GM10248 (cell line): ENCODE measurements at regions of chr16 and their contacts with region 1.

Region 1: DNA sequence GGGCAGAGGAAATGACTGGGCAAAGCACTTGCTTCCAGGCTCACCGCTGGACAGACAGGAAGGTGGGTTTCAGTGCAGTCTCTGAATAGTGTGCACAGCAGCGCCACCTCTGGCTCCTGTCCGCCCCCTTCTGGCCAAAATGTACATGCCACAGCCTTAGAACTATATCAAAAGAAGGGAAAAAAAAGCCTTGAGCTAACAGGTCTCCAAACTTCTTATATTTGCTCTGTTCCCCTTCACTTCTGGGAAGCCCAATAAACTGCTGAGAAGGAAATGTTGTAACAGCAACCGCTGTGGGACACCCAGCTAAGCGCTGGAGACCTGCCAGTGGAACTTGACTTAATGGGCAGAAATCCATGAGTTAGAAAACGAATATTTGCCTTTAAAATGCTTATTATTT is 17.5 kb downstream of the COG7 start:
- DNase-seq: peak; percentile 71
- CTCF ChIP-seq: peak; percentile 87

Region 2: GRCh38 chr16:23174622-23175021 is 260.9 kb before region 1 on chr16:
- CTCF ChIA-PET with region 1: interaction called, 304 read pairs
- POLR2A ChIA-PET with region 1: no interaction called
- DNase-seq: no peak
- CTCF ChIP-seq: no peak

Region 3: DNA sequence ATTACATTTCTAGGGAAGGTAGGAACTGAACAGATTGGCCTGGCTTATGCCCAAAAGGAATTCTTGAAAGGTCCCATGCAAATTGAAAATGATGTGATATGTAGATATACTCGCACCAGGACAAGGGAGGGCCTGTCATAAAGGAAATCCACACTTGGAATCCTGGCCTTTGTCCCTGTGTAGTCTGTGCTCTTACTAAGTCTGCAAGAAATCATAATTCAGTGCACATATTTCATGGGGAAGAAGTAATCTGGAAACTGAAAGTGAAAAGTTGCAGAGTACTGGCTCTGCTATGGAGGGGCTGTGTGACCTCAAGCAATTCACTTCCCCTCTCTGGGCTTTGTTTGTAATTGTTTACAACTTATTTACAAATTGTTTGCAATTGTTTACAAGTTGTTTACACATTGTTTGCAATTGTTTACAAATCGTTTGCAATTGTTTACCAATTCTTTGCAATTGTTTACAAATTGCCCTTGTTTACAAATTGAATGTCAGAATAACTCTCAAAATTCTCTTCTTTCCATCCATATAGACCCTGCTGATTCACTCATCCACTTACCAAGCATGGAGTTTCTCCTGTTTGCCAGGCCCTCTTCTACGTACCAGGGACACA is 240.0 kb before region 1 on chr16:
- CTCF ChIA-PET with region 1: interaction called, 11 read pairs
- POLR2A ChIA-PET with region 1: no interaction called
- DNase-seq: no peak
- CTCF ChIP-seq: no peak

Region 4: DNA sequence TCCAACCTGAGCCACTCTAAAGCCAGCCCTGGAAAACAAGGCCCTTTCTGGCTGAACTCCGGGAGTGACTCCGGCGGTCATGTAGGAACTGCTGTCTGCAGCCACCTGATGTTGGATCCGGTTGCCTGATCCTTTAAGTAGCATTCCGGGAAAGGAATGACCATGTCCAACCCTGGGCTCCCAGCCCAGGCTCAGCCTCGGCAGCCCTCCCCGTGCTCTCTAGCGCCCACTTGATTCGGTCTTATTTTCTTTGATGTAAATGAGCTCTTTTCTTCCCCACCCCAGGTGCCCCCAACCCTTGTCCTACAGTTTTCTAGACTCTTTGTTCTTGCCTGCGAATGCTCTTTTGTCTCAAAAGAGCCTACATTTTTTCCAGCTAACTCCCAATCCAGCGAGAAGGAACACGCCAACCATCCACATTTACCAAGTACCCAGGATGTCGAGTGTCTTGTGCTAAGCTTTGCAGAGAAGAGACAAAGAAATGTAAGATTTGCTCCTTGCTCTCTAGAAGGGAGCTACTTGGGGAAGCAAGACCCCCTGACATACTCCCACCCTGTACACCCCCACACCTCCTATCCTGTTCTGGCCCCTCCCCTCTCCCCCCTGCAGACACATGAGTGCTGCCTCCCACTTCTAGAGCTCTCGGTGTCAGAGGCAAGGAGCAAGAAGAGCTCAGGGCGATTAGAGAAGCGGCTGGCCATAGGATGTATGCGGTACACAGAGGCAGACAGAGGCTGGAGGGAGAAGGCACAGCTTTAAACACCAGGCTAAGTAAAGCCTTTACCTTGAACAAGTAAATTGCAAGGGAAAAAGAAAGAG is 36.3 kb before region 1 on chr16:
- CTCF ChIA-PET with region 1: interaction called, 14 read pairs
- POLR2A ChIA-PET with region 1: no interaction called
- DNase-seq: no peak
- CTCF ChIP-seq: no peak

Region 5: DNA sequence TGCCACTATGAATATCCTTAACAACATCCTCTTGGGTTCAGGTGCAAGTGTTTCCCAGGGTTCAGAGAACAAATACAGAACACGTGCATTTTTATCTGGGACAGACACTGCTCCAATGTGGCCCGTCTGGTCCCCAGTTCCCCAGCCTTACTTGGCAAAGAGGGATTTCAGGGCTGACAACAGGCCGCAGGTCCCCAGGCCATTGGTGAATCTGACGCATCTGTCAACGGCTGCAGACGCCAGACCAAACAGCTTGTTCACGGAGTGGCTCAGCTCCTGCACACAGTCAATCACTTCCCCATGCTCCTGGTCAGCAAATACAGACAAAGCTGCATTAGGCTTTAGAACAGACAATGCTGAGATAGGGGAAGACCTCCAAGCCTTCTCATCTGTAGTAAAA is 18.7 kb before region 1 on chr16:
- CTCF ChIA-PET with region 1: interaction called, 49 read pairs
- POLR2A ChIA-PET with region 1: no interaction called
- DNase-seq: no peak
- CTCF ChIP-seq: no peak

Region 6: DNA sequence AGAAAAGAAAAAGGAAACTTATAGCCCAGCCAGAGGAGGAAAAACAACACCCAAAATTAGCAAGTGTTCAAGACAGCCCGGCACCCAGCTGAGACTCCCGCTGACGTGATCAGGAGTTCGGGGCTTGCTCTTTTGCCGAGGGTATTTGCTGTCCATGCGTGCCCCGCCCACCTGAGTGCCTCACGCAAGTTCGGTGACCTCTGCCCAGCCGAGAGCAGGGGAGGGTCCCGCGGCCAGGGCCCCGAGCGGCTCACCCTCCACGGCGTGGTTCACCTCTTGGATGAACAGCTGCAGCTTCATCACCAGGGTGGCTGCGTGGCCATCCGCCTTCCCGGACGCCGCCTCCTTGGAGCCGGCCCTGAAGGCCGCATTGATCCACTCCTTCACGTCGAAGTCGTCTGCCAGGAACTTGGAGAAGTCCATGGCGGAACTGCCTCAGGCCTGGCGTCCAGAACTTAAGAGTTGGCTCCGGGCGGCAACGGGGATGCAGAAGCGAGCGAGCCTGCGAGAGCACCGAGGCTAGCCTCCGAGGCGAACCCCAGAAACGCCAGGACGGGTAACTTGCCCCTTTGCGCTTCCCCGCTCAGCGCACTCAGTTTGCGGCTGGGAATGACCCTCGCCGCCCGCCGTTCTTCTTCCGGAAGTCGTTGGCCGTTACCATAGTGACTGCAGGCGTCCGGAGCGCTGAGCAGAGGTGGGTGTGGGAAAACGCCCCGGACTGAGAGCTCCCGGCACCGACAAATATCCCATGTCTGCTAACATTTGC is 17.3 kb after region 1 on chr16 and contains the start of gene COG7:
- CTCF ChIA-PET with region 1: interaction called, 98 read pairs
- POLR2A ChIA-PET with region 1: no interaction called
- DNase-seq: peak; percentile 91
- CTCF ChIP-seq: no peak